Activated B cell treated with CpG ODN at 0.5 μM for 24 hours (primary cell): ENCODE measurements at regions of chr5 and their contacts with region 1.

Region 1: GRCh38 chr5:57032151-57032551 is 80.2 kb upstream of the MIER3 start:
- DNase-seq: no peak
- ATAC-seq: no peak
- H3K4me3 Mint-ChIP-seq: no peak overlapping the region
- H3K27ac Mint-ChIP-seq: no peak overlapping the region
- H3K4me1 Mint-ChIP-seq: peaks cover 35% of the 10 kb centered on the region
- H3K27me3 Mint-ChIP-seq: no peaks in the 10 kb centered on the region
- CTCF ChIP-seq: no peak

Region 2: DNA sequence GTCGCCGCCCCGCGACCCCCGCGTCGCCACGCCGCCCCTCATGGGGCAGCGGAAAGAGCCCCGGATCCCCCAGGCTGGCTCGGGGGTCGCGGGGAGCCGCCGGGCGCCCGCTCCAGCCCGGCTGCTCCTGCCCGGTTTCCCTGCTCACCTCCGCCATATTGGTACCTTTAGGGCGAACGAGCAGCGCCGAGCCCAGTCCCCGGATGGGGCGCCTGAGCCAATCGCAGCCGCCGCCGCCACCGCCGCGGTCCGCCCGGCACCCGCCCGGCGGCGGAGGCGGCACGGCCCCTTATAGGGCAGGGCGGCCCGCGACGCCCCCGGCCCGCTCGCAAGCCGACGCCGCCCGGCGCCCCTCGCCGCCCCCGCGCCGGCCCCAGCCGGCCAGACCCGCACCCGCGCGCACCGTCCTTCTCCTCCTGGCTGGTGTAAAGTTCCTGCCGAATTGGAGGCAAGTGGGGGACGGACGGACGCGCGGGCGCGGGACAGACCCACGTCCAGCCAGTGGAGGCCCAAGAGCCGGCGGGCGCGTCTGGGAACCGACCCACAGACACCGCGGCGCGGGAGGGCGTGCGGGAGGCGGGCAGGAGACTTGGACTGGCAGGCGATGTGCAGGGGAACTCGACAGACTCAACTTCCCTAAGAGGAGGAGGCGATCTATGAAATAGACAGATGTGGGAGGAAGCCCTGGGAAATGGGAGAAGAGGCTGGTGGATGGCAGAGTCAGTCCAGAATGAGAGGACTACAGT is 80.0 kb before region 1 on chr5 and contains the start of gene MIER3:
- CTCF ChIA-PET with region 1: no interaction called
- POLR2A ChIA-PET with region 1: interaction called, 3 read pairs
- intact Hi-C with region 1: loop called (anchors 2 kb)
- DNase-seq: peak; percentile 75
- ATAC-seq: peak; percentile 96
- H3K4me3 Mint-ChIP-seq: peak within 1 kb of the TSS; percentile 95
- H3K27ac Mint-ChIP-seq: peak within 1 kb of the TSS; percentile 80
- H3K4me1 Mint-ChIP-seq: peaks cover 20% of the 10 kb centered on the region
- H3K27me3 Mint-ChIP-seq: peaks cover 7% of the 10 kb centered on the region
- CTCF ChIP-seq: no peak
- total RNA-seq, gene MIER3: 22.2 and 23.5 TPM in 2 replicates

Region 3: DNA sequence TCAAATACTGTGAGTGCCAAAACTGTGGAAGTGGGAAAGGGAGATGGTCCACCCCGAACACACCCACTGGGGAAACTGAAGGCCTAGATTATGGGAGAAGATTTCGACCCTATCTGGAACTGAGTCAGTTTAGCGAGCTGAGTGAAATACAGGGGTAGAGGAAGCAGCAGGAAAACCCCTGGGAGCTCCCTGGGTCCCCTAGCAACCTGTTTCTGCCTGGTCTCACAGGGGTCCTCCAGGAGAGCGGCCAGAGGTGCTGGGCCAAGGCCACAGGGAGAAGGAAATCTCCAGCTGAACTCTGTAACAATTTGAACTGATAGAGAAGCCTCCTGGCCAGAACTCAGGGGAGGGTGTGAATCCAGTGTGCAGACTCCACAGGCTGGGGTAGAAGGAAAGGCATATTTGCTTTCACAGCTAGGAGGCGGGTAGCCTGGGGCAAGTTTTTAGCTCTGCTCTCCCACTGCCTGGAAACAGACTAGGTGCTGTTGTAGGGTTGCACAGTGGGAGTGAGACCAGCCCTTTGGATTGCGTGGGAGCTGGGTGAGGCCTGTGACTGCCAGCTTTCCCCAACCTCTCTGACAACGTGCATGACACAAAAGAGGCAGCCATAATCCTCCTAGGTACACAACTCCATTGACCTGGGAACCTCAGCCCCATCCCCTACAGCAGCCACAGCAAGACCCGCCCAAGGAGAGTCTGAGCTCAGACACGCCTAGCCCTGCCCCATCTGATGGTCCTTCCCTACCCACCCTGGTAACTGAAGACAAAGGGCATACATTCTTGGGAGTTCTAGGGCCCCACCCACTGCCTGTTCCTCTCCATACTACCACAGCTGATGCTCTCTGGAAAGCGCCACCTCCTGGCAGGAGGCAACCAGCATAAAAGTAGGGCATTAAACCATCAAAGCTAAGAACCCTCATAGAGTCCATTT is 62.9 kb after region 1 on chr5:
- CTCF ChIA-PET with region 1: no interaction called
- POLR2A ChIA-PET with region 1: no interaction called
- intact Hi-C with region 1: no loop called
- DNase-seq: no peak
- ATAC-seq: no peak
- H3K4me3 Mint-ChIP-seq: no peak overlapping the region
- H3K27ac Mint-ChIP-seq: no peak overlapping the region
- H3K4me1 Mint-ChIP-seq: peaks cover 9% of the 10 kb centered on the region
- H3K27me3 Mint-ChIP-seq: no peaks in the 10 kb centered on the region
- CTCF ChIP-seq: no peak